Activated CD8-positive, alpha-beta T cell treated with anti-CD3 and anti-CD28 coated beads for 36 hours (primary cell): ENCODE measurements at regions of chr7 and their contacts with region 1.

Region 1: GRCh38 chr7:150737265-150738055 is at the start of gene GIMAP5:
- DNase-seq: peak; percentile 70
- ATAC-seq: peak; percentile 60
- H3K4me3 Mint-ChIP-seq: peak within 1 kb of the TSS; percentile 89
- H3K27ac Mint-ChIP-seq: peak within 1 kb of the TSS; percentile 97
- H3K4me1 Mint-ChIP-seq: peaks cover 72% of the 10 kb centered on the region
- H3K27me3 Mint-ChIP-seq: no peaks in the 10 kb centered on the region
- CTCF ChIP-seq: no peak
- total RNA-seq, gene GIMAP5: 37.6 to 40.7 TPM

Region 2: GRCh38 chr7:150514748-150515222 is 222.7 kb before region 1 on chr7 and contains the start of gene GIMAP7:
- CTCF ChIA-PET with region 1: interaction called, 5 read pairs
- POLR2A ChIA-PET with region 1: interaction called, 20 read pairs
- intact Hi-C with region 1: loop called (anchors 5 kb)
- DNase-seq: peak; percentile 72
- ATAC-seq: peak; percentile 80
- H3K4me3 Mint-ChIP-seq: peak within 1 kb of the TSS; percentile 98
- H3K27ac Mint-ChIP-seq: peak within 1 kb of the TSS; percentile 99
- H3K4me1 Mint-ChIP-seq: peaks cover 46% of the 10 kb centered on the region
- H3K27me3 Mint-ChIP-seq: no peaks in the 10 kb centered on the region
- CTCF ChIP-seq: no peak
- total RNA-seq, gene GIMAP7: 29.0 to 29.5 TPM

Region 3: DNA sequence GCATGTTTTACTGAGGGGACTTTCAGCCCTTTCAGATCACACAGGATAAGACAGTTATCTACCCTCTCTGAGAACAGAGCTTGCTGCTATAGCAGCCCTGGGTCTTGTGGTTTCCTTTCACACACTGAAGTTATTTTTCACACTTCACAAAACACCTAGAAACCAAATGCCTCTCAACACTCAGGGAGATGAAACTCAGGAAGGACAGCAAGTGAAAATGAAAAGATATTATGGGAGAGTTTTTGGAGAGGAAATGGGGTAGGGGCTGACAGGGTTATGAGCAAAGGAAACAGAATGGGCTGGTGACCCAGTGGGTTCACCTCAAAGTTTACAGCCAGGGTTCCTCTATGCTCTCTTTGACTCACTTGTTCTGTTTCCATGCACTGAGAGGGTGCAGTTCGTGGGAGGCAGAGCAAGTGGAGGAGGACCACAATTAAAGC is 69.0 kb before region 1 on chr7:
- CTCF ChIA-PET with region 1: interaction called, 5 read pairs
- POLR2A ChIA-PET with region 1: interaction called, 10 read pairs
- intact Hi-C with region 1: loop called (anchors 2 kb)
- DNase-seq: peak; percentile 85
- ATAC-seq: peak; percentile 73
- H3K4me3 Mint-ChIP-seq: peak overlapping the region; percentile 54
- H3K27ac Mint-ChIP-seq: peak overlapping the region; percentile 97
- H3K4me1 Mint-ChIP-seq: peaks cover 86% of the 10 kb centered on the region
- H3K27me3 Mint-ChIP-seq: no peaks in the 10 kb centered on the region
- CTCF ChIP-seq: no peak

Region 4: DNA sequence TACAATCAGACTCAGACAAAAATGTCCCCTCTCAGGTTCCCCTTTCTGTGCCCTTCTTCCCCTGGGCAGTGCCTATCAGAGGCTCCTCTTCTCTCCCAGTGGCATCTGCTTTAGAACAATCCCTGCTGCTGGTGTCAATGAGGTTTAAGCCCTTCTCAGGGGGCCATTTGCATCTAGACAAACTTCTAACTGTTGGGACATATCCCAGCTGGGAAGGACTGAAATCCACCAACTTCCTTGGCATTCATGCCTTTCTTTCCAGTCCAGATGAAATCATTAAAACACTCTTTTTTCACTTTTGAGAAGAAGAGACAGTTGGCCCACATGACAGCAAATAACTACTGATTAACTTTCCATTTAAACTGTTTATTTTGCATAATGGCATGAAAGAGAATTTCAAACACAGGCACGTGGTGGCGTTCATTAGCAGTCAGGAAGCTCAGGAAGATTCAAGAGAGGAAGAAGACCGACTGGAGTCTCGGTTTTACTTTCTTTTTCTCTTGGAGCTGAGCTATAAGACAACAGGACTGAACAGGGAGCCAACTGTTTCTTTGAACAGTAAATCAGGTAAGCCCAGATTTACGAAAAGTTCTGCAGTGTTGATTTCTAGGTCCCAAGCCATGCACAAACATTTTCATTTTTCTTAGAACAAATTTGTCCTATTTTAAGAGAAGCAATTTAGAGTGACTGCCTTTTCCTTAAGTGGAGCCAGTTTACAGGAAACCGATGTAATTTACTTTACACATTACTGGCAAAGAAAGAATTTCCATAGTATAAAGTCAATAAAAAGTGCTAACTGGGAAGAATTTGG is 52.0 kb before region 1 on chr7 and contains the start of gene GIMAP2:
- CTCF ChIA-PET with region 1: interaction called, 3 read pairs
- POLR2A ChIA-PET with region 1: interaction called, 9 read pairs
- intact Hi-C with region 1: loop called (anchors 5 kb)
- DNase-seq: peak; percentile 49
- ATAC-seq: peak; percentile 80
- H3K4me3 Mint-ChIP-seq: peak within 1 kb of the TSS; percentile 96
- H3K27ac Mint-ChIP-seq: peak within 1 kb of the TSS; percentile 100
- H3K4me1 Mint-ChIP-seq: peaks cover 75% of the 10 kb centered on the region
- H3K27me3 Mint-ChIP-seq: no peaks in the 10 kb centered on the region
- CTCF ChIP-seq: no peak
- total RNA-seq, gene GIMAP2: 42.2 to 42.7 TPM

Region 5: DNA sequence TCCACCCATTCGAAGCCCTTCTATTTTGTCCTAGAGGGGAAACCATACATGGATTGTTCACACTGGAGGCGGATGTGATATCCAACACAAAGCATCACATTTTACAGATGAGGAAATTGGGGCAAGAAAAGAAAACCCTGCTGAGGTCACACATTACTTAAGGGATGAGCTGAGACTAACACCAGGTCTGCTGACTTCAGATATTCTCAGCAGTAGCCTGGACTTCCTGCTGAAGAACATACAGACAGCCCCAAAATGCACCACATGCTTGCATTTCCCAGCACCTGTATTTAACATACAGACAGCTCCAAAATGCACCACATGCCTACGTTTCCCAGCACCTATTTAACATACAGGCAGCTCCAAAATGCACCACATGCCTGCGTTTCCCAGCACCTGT is 10.9 kb after region 1 on chr7:
- CTCF ChIA-PET with region 1: interaction called, 7 read pairs
- POLR2A ChIA-PET with region 1: interaction called, 21 read pairs
- intact Hi-C with region 1: no loop called
- DNase-seq: no peak
- ATAC-seq: peak; percentile 43
- H3K4me3 Mint-ChIP-seq: no peak overlapping the region
- H3K27ac Mint-ChIP-seq: peak overlapping the region; percentile 84
- H3K4me1 Mint-ChIP-seq: peaks cover 92% of the 10 kb centered on the region
- H3K27me3 Mint-ChIP-seq: no peaks in the 10 kb centered on the region
- CTCF ChIP-seq: no peak

Region 6: GRCh38 chr7:150753826-150754603 is 16.6 kb after region 1 on chr7:
- CTCF ChIA-PET with region 1: interaction called, 6 read pairs
- POLR2A ChIA-PET with region 1: interaction called, 19 read pairs
- intact Hi-C with region 1: loop called (anchors 2 kb)
- DNase-seq: peak; percentile 60
- ATAC-seq: peak; percentile 60
- H3K4me3 Mint-ChIP-seq: no peak overlapping the region
- H3K27ac Mint-ChIP-seq: peak overlapping the region; percentile 95
- H3K4me1 Mint-ChIP-seq: peaks cover 77% of the 10 kb centered on the region
- H3K27me3 Mint-ChIP-seq: no peaks in the 10 kb centered on the region
- CTCF ChIP-seq: no peak

Region 7: GRCh38 chr7:150787321-150788281 is 50.1 kb after region 1 on chr7:
- CTCF ChIA-PET with region 1: no interaction called
- POLR2A ChIA-PET with region 1: no interaction called
- intact Hi-C with region 1: no loop called
- DNase-seq: no peak
- ATAC-seq: no peak
- H3K4me3 Mint-ChIP-seq: no peak overlapping the region
- H3K27ac Mint-ChIP-seq: no peak overlapping the region
- H3K4me1 Mint-ChIP-seq: no peaks in the 10 kb centered on the region
- H3K27me3 Mint-ChIP-seq: peaks cover 7% of the 10 kb centered on the region
- CTCF ChIP-seq: no peak

Region 8: DNA sequence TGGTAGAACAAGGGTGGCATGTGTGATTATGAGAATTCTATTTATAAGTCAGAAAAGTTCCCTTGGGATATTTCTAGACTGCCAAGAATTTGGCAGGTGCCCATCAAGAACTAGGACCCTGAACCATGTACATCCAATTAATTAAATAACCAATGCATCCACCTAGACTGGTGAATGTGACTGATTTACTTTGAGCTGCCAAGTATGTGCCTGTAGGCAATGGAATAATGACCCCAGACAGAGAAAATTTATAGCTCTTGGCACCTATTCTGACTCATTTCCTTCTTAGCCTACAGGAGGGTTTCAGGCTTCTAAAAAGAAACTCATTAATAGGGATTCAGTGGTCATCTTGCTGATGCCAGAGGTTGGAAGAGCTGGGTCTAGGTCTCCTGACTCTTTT is 185.7 kb after region 1 on chr7:
- CTCF ChIA-PET with region 1: no interaction called
- POLR2A ChIA-PET with region 1: no interaction called
- intact Hi-C with region 1: no loop called
- DNase-seq: no peak
- ATAC-seq: no peak
- H3K4me3 Mint-ChIP-seq: no peak overlapping the region
- H3K27ac Mint-ChIP-seq: no peak overlapping the region
- H3K4me1 Mint-ChIP-seq: peaks cover 16% of the 10 kb centered on the region
- H3K27me3 Mint-ChIP-seq: peaks cover 16% of the 10 kb centered on the region
- CTCF ChIP-seq: no peak